ENCODE measurements at regions of chr5 and their contacts with region 1.

Region 1: DNA sequence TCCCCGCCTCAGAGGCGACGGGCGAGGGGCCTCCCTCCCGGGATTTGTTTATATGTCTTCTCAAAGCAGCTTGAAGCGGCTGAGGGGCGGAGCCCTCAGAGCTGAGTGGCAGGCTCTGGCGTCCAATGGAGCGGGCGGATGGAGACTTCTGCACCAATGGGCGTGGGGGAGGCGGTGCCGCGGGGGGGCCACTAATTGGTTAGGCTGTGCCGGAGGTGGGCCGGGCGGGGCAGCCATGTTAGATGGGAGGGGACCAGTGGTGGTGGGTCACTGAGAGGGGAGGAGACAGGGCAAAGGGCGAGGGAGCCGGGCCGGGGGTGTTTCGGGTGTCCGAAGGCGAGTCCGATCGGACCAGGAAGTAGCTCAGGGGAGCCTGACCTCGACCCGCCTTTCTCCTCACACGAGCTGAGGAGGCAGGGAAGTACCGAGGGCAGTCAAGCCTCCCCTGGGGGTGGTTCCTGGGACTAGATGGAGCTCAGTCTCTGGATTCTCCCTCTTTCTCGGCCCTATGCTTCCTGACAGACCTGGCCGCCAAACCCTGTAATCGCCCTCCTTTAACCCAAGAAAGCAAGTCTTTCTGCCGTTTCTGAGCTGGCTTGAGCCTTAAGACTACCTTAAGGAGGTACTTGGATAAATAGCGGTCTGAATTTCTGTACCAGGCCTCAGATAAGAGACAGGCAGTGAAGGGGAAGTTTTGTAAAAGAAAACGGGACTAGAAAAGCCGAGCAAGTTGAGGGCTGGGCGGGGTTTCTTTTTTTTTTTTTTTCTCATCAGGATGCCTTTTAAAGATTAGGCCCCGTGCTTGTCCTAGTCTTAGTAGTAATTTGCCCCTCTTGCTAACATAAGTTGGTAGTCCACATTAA is 1.1 kb downstream of the CREBRF start:
- DNase-seq: peak; percentile 99
- H3K4me3 Mint-ChIP-seq: peak overlapping the region; percentile 93
- H3K27ac Mint-ChIP-seq: peak overlapping the region; percentile 94
- H3K4me1 Mint-ChIP-seq: peaks cover 40% of the 10 kb centered on the region
- H3K27me3 Mint-ChIP-seq: no peaks in the 10 kb centered on the region

Region 2: DNA sequence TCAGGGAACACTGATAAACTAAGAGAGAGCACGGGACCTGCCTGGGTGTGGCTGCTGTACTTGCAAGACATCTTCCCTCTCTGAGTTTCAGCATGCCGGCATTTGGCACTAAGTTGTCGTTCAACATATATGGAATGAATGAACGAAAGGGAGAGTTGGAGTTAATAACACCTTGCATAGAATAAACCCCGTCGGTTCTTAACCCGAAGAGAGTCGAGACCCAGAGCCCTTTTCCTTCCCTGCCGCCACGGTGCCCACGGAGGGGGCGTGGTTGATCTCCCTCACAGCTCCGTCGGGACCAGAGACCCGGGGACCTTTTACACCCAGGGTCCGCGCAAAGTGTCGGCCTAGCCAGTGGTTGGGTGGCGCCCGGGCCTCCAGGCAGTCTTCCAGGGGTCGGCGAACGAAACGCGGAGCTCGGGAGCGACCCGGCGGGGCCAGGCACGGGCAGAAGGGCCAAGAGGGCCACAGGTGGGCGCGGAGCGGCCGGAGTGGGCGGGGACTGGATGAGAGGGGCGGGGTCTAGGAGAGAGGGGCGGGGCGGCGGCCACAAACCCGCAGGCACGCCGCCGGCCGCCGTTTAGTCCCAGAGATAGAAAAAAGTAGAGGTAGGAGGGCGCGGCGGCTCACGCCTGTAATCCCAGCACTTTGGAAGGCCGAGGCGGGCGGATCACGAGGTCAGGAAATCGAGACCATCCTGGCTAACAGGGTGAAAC is 98.8 kb before region 1 on chr5:
- CTCF ChIA-PET with region 1: interaction called, 6 read pairs
- POLR2A ChIA-PET with region 1: interaction called, 10 read pairs
- DNase-seq: peak; percentile 72
- H3K4me3 Mint-ChIP-seq: peak overlapping the region; percentile 87
- H3K27ac Mint-ChIP-seq: peak overlapping the region; percentile 91
- H3K4me1 Mint-ChIP-seq: peaks cover 26% of the 10 kb centered on the region
- H3K27me3 Mint-ChIP-seq: peaks cover 8% of the 10 kb centered on the region

Region 3: GRCh38 chr5:173035904-173036707 is 21.2 kb before region 1 on chr5:
- CTCF ChIA-PET with region 1: interaction called, 6 read pairs
- POLR2A ChIA-PET with region 1: interaction called, 32 read pairs
- DNase-seq: peak; percentile 20
- H3K4me3 Mint-ChIP-seq: peak overlapping the region; percentile 71
- H3K27ac Mint-ChIP-seq: peak overlapping the region; percentile 96
- H3K4me1 Mint-ChIP-seq: peaks cover 51% of the 10 kb centered on the region
- H3K27me3 Mint-ChIP-seq: no peaks in the 10 kb centered on the region

Region 4: DNA sequence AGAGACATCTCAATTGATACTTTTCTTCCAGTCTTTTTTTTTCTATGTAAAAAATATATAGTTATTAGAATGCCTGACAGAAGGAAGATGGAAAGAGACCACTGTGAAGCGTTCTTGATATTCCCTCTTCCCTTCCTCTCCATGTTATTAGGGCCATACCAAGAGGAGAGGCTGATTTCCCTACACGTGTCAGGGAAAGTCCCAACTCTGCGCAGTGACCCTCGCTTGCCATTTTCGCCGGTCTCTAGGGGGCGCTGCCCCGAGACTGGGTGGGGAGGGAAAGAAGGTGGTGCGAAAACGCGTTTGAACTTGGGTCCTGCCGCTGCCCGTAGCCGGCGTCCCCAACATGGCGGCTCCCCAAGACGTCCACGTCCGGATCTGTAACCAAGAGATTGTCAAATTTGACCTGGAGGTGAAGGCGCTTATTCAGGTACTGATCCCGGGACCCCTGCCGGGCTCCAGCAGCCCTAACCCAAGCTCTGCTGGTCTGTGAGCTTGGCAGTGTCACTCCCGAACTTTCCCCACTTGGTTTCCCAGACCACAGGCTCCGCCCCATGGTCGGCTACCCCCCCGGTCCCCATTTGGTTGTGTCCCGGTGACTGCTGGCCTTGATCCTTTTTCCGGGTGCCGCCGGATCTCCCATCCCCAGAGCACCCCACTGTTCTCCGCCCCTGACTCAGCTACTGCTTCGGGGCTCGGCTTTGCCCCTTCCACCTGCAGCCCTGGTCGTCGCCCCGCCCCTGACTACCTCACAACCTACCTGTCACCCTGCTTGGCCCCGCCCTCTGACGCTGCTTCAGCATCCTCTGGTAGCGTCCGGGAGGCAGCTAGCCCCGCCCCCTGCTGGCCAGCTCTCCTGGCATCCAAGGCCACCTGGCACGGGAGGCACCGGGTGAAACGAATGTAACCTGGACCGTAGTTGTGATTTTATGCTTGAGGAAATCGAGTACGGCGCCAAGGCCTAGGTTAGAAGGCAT is 87.2 kb after region 1 on chr5 and contains the start of gene BNIP1:
- CTCF ChIA-PET with region 1: interaction called, 5 read pairs
- POLR2A ChIA-PET with region 1: interaction called, 16 read pairs
- DNase-seq: peak; percentile 95
- H3K4me3 Mint-ChIP-seq: peak within 1 kb of the TSS; percentile 98
- H3K27ac Mint-ChIP-seq: peak within 1 kb of the TSS; percentile 92
- H3K4me1 Mint-ChIP-seq: peaks cover 17% of the 10 kb centered on the region
- H3K27me3 Mint-ChIP-seq: no peaks in the 10 kb centered on the region
- total RNA-seq, gene BNIP1: 13.2 to 13.3 TPM

Region 5: GRCh38 chr5:173172166-173172565 is 114.9 kb after region 1 on chr5:
- CTCF ChIA-PET with region 1: no interaction called
- POLR2A ChIA-PET with region 1: no interaction called
- DNase-seq: no peak
- H3K4me3 Mint-ChIP-seq: no peak overlapping the region
- H3K27ac Mint-ChIP-seq: no peak overlapping the region
- H3K4me1 Mint-ChIP-seq: no peaks in the 10 kb centered on the region
- H3K27me3 Mint-ChIP-seq: no peaks in the 10 kb centered on the region